Uterus (tissue), 4 donors: ENCODE measurements at regions of chr6 and their contacts with region 1.

Region 1: GRCh38 chr6:148177589-148178233 is 164.9 kb upstream of the SASH1 start:
- DNase-seq: peak; percentile 57 to 69
- H3K4me3 ChIP-seq: no peak overlapping the region
- H3K27ac ChIP-seq: no peak overlapping the region
- H3K4me1 ChIP-seq: no peaks in the 10 kb centered on the region
- H3K27me3 ChIP-seq: no peaks in the 10 kb centered on the region
- CTCF ChIP-seq: peak; percentile 73 to 82 (median 76)
- POLR2A ChIP-seq: no peak

Region 2: DNA sequence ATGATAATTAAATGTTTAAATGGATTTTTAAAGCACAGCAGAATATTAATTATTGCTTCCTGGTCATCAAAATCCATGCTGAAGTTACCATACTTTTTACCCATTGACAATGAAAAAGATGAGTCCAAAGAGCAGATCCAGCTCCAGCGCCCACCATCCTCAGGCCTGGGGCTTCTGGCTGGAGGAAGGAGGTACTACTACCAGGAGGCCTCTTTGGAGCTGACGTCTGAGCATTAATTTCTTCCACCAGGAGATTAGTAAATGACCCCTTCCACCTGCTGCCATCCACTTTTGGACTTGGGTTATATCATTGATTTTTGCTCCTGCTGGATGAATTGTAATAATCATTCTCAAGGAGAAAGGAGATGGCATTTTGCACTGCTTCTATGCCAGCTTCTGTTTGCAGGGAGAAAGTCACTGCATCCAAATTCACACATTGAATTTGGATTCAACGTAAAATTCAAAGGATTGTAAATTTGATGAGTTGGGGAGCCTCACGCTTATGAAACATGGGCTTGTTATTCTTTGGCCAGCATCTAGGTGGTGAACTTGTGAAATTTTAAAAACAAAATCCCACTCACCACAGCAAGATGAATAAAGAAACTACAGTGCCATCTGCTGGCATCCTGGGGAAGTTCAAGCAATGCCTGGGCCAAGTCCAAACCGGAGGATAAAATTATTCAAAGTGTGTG is 286.8 kb after region 1 on chr6:
- intact Hi-C with region 1: loop called (anchors 10 kb)
- DNase-seq: peak; percentile 72 to 78
- H3K4me3 ChIP-seq: no peak overlapping the region
- H3K27ac ChIP-seq: peak overlapping the region; percentile 3 to 70
- H3K4me1 ChIP-seq: no peaks in the 10 kb centered on the region
- H3K27me3 ChIP-seq: no peaks in the 10 kb centered on the region
- CTCF ChIP-seq: peak; percentile 91 to 99 (median 92)
- POLR2A ChIP-seq: no peak